AG04449 (cell line): ENCODE measurements at regions of chr3 and their contacts with region 1.

Region 1: DNA sequence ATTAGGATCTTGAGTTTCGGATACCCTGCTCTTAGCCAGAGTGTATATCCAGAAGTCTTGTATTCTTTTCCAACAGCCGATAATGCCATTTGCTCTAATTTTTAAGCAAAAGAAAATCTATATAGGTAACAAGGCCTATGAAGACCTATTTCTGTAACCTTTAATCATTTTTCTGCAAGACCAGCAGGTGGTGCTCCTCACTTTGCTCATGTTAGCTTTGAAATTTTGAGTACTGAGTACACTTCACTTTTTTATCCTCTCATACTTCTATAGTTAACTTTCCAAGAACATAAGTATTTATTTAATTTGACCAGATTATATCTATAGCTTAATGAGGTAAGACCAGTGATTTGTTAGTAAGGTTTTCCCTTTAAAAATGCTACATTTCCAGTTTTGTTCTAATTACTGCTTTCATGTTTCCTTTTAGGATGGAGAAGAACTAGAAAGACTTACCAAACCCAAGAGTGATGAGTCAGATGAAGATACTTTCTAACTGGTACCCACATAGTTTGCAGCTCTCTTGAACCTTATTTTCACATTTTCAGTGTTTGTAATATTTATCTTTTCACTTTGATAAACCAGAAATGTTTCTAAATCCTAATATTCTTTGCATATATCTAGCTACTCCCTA is 20.5 kb downstream of the SLC35A5 start:
- DNase-seq: peak; percentile 37
- H3K4me3 ChIP-seq: no peak overlapping the region
- CTCF ChIP-seq: peak; percentile 53

Region 2: DNA sequence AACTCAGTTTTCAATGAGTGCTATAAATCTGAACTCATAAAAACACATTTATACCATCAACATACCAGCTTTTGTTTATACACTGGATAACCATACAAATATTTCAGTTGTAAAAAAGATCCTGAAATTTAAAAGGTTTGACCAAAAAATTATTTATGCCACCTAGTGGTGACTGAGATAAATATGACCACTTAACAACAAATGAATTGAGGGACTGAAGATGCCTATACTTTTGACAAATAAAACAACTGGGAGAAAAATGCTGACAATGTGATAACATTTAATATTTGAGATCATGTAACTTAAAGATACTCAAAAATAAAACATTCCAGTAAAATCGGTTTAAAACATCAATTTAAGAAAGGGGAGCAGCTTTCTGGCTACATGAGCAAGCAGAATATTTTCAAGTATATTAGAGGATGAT is 51.0 kb before region 1 on chr3:
- CTCF ChIA-PET with region 1: no interaction called
- POLR2A ChIA-PET with region 1: no interaction called
- DNase-seq: no peak
- H3K4me3 ChIP-seq: no peak overlapping the region
- CTCF ChIP-seq: no peak

Region 3: DNA sequence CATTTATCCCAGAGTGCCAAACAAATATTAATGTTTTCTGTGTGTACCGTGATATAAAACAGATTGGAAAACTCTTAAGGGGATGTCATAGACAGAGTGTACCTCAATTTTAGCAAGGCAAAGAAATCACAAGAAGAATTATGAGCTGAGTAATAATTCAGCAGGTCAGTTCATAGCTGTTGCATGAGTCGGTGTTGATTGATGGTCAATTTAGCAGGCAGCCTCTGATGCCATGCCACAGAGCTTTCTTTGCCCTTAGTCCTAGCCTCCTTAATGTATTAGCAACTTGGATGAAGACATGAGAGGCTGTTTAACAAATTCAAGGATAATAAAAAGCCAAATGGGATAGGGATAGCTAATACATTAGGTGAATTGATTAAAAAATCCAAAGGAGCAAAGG is 13.7 kb before region 1 on chr3:
- CTCF ChIA-PET with region 1: interaction called, 23 read pairs
- POLR2A ChIA-PET with region 1: no interaction called
- DNase-seq: no peak
- H3K4me3 ChIP-seq: no peak overlapping the region
- CTCF ChIP-seq: no peak

Region 4: GRCh38 chr3:112611752-112612515 is 29.6 kb after region 1 on chr3:
- CTCF ChIA-PET with region 1: interaction called, 17 read pairs
- POLR2A ChIA-PET with region 1: no interaction called
- DNase-seq: no peak
- H3K4me3 ChIP-seq: no peak overlapping the region
- CTCF ChIP-seq: no peak

Region 5: GRCh38 chr3:112635671-112636070 is 53.3 kb after region 1 on chr3:
- CTCF ChIA-PET with region 1: interaction called, 25 read pairs
- POLR2A ChIA-PET with region 1: interaction called, 4 read pairs
- DNase-seq: peak; percentile 69
- H3K4me3 ChIP-seq: peak overlapping the region; percentile 74
- CTCF ChIP-seq: peak; percentile 4

Region 6: GRCh38 chr3:113035387-113035982 is 453.1 kb after region 1 on chr3:
- CTCF ChIA-PET with region 1: interaction called, 27 read pairs
- POLR2A ChIA-PET with region 1: no interaction called
- DNase-seq: no peak
- H3K4me3 ChIP-seq: no peak overlapping the region
- CTCF ChIP-seq: peak; percentile 82